ENCODE measurements at regions of chr15 and their contacts with region 1.

Region 1: DNA sequence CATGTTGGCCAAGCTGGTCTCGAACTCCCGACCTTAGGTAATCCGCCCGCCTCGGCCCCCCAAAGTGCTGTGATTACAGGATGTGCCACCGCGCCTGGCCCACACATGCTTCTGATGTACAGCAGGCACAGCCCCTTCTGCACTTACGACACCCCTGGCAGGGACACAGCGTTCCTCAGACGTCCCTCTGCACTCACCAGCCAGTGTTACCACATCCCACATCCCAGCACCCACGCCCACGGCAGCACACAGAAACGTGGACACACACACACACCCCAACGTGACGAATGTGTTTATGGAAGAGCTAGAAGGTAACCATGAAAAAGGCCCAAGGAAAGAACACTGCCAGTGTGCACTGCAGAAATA is 576 bp upstream of the RPAP1 start:
- DNase-seq: peak; percentile 21
- ATAC-seq: no peak
- H3K4me3 Mint-ChIP-seq: peak overlapping the region; percentile 95
- H3K27ac Mint-ChIP-seq: peak overlapping the region; percentile 91
- H3K4me1 Mint-ChIP-seq: peaks cover 12% of the 10 kb centered on the region
- H3K27me3 Mint-ChIP-seq: no peaks in the 10 kb centered on the region

Region 2: DNA sequence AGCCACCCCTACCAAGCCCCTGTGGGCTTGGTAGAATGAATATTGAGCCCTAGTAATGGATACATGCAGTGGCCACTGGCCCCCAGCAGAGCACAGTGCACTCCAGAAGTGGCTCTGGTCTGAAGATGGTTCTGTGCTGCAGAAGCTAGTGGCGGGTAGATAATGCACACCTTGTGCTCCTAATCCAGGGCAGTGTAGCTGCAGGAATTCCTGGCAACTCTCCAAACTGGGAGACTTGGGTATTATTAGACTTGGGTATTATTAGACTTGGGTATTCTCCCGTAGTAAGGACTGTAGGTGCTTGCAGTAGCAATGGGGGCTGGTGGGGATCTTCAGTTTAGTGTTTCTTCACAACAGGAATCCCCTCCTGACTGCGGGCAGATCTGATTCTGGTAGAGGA is 177.2 kb before region 1 on chr15:
- CTCF ChIA-PET with region 1: no interaction called
- POLR2A ChIA-PET with region 1: no interaction called
- intact Hi-C with region 1: no loop called
- DNase-seq: no peak
- ATAC-seq: no peak
- H3K4me3 Mint-ChIP-seq: no peak overlapping the region
- H3K27ac Mint-ChIP-seq: no peak overlapping the region
- H3K4me1 Mint-ChIP-seq: no peaks in the 10 kb centered on the region
- H3K27me3 Mint-ChIP-seq: no peaks in the 10 kb centered on the region

Region 3: DNA sequence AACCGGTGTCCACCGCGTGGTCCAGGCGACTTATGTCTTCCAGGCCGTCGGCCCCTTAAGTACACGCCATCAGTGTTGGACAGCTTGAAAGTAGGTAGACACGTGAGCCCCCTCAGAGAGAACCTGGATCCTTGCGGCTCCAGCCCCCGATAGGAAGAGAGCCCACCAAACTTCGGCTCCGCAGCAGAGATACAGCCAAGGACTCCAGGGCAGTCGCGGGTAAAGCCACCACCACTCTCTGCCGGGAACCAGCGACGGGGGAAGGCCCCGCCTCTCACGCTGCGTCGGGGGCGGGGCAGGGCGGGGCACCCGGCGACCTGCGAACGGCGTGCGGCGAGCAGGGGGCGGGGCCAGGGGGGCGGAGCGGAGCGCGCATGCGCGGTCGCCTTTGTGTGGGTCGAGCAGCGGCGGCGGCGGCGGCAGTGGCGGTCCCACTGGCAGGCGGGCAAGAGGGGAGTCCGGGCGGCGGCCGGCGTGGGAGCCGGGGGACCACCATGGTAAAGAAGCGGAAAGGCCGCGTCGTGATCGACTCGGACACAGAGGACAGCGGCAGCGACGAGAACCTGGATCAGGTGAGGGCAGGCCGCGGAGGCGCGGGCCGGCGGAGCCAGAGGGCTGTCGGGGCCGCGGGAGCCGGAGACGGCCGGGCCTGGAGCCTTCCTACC is 127.8 kb before region 1 on chr15 and contains the start of gene RTF1:
- CTCF ChIA-PET with region 1: no interaction called
- POLR2A ChIA-PET with region 1: no interaction called
- intact Hi-C with region 1: loop called in 1 of 2 experiments (anchors 1 kb)
- DNase-seq: peak; percentile 98
- ATAC-seq: peak; percentile 94
- H3K4me3 Mint-ChIP-seq: peak within 1 kb of the TSS; percentile 88
- H3K27ac Mint-ChIP-seq: peak within 1 kb of the TSS; percentile 92
- H3K4me1 Mint-ChIP-seq: peaks cover 38% of the 10 kb centered on the region
- H3K27me3 Mint-ChIP-seq: no peaks in the 10 kb centered on the region
- total RNA-seq, gene RTF1: 29.4 to 32.3 TPM

Region 4: GRCh38 chr15:41695750-41696426 is 151.3 kb after region 1 on chr15:
- CTCF ChIA-PET with region 1: no interaction called
- POLR2A ChIA-PET with region 1: no interaction called
- intact Hi-C with region 1: loop called in 1 of 2 experiments (anchors 5 kb)
- DNase-seq: peak; percentile 66
- ATAC-seq: peak; percentile 93
- H3K4me3 Mint-ChIP-seq: peak overlapping the region; percentile 2
- H3K27ac Mint-ChIP-seq: peak overlapping the region; percentile 78
- H3K4me1 Mint-ChIP-seq: peaks cover 43% of the 10 kb centered on the region
- H3K27me3 Mint-ChIP-seq: no peaks in the 10 kb centered on the region

Measured in activated CD4-positive, alpha-beta T cell treated with anti-CD3 and anti-CD28 coated beads for 36 hours (primary cell).